K562 (cell line): ENCODE measurements at regions of chr16 and their contacts with region 1.

Region 1: GRCh38 chr16:16137056-16137455 is 86.2 kb downstream of the ABCC6 start:
- DNase-seq: no peak
- ATAC-seq: no peak
- H3K4me3 ChIP-seq: no peak overlapping the region
- H3K27ac ChIP-seq: no peak overlapping the region
- H3K4me1 ChIP-seq: no peaks in the 10 kb centered on the region
- H3K27me3 ChIP-seq: no peaks in the 10 kb centered on the region
- CTCF ChIP-seq: no peak
- EP300 ChIP-seq: no peak
- POLR2A ChIP-seq: no peak
- RAD21 ChIP-seq: no peak

Region 2: DNA sequence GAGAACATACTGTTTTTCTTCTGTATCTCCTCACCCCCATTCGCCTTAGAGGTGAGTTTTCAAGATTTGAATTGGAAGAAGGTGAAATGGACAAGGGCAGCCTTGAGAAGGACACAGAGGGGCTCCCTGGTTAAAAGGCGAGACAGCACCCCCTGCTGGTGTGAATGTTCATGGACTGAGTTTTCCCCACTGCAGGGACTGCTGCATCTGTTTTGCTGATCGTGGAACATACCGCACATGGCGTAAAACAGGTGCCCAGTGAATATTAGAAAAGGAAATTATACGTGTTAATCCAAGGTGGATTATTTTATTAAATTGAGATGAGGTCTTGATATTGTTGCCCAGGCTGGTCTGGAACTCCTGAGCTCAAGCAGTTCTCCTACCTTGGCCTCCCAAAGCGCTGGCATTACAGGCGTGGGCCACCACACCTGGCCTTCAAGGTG is 432.5 kb before region 1 on chr16:
- CTCF ChIA-PET with region 1: no interaction called
- POLR2A ChIA-PET with region 1: no interaction called
- in situ Hi-C with region 1: no loop called
- intact Hi-C with region 1: no loop called
- DNase-seq: peak; percentile 84 to 89 (median 86)
- ATAC-seq: peak; percentile 97
- H3K4me3 ChIP-seq: no peak overlapping the region
- H3K27ac ChIP-seq: no peak overlapping the region
- H3K4me1 ChIP-seq: peaks cover 0 to 5% of the 10 kb centered on the region in 2 experiments; a peak in 2 of 5 replicates
- H3K27me3 ChIP-seq: no peaks in the 10 kb centered on the region
- CTCF ChIP-seq: peak; percentile 63 to 91 (median 87)
- EP300 ChIP-seq: no peak
- POLR2A ChIP-seq: no peak
- RAD21 ChIP-seq: peak; percentile 62 to 85

Region 3: GRCh38 chr16:16025214-16025968 is 111.7 kb before region 1 on chr16:
- CTCF ChIA-PET with region 1: no interaction called
- POLR2A ChIA-PET with region 1: no interaction called
- in situ Hi-C with region 1: no loop called
- intact Hi-C with region 1: no loop called
- DNase-seq: peak in 3 of 4 experiments; percentile 15 to 24 (median 21)
- ATAC-seq: no peak
- H3K4me3 ChIP-seq: no peak overlapping the region
- H3K27ac ChIP-seq: no peak overlapping the region; the same call in 2 of the 3 replicates
- H3K4me1 ChIP-seq: peaks cover 41 to 43% of the 10 kb centered on the region in 2 experiments
- H3K27me3 ChIP-seq: no peaks in the 10 kb centered on the region
- CTCF ChIP-seq: no peak
- EP300 ChIP-seq: no peak
- POLR2A ChIP-seq: no peak
- RAD21 ChIP-seq: no peak

Region 4: GRCh38 chr16:16183562-16183961 is 46.5 kb after region 1 on chr16:
- CTCF ChIA-PET with region 1: no interaction called
- POLR2A ChIA-PET with region 1: no interaction called
- in situ Hi-C with region 1: no loop called
- intact Hi-C with region 1: loop called (anchors 5 kb)
- DNase-seq: peak in 1 of 4 experiments; percentile 32
- ATAC-seq: no peak; the same call in 2 of the 3 replicates
- H3K4me3 ChIP-seq: no peak overlapping the region
- H3K27ac ChIP-seq: no peak overlapping the region
- H3K4me1 ChIP-seq: peaks cover 4 to 10% of the 10 kb centered on the region in 2 experiments; a peak in 2 of 5 replicates
- H3K27me3 ChIP-seq: peaks cover 0 to 25% of the 10 kb centered on the region in 2 experiments; a peak in 3 of 5 replicates
- CTCF ChIP-seq: peak; percentile 35 to 64 (median 38); a peak in 5 of 6 replicates
- EP300 ChIP-seq: no peak
- POLR2A ChIP-seq: no peak
- RAD21 ChIP-seq: no peak